T-cell (primary cell): ENCODE measurements at regions of chr15 and their contacts with region 1.

Region 1: DNA sequence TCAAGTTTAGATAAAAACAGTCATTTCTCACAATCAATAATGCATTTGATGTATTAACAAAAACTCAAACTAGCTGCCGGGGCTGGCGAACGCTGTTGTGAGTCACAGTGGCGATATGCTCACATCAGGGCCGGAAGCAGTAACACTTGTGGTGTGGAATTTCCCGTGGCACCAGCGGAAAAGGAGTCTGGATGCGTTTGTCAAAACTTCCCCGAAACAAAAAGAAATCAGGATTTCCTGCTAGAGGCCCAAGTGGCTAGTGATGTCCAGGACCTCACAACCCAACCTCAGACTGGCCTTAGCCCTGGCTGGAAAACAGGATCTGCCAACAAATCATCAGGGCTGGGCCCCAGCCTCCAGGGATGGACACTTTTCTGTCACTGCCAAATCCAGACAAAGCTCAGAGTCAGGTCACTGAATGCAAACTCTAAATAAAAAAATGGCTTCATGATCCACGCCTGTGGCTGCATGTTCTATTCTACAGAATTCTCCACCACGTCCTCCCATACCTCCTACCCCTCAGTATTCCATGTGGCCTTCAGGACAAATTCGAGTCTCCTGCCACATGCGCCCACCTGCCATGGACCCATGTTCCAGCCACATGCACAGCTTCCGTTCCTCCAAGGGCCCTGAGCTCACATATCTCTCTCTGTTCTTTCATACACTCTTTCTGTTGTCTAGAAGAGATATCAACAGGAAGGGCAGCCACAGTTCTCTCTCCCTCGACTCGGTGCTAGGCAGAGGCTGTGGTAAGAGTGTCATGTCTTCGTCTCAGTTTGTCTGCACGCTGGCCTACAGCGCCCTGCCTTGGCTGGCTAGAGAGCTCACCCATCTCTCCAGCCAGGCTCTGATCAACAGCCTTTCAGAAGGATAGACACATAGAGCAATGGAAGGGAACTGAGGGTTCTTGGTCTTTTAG is 35.4 kb downstream of the EHD4 start:
- DNase-seq: peak; percentile 58 to 92 (median 76)
- ATAC-seq: peak; percentile 84 to 88 (median 88)
- H3K4me3 ChIP-seq: peak overlapping the region in 1 of 2 donors; percentile 2
- H3K4me3 Mint-ChIP-seq: peak overlapping the region; percentile 58 to 82 (median 77)
- H3K27ac ChIP-seq: peak overlapping the region; percentile 96
- H3K27ac Mint-ChIP-seq: peak overlapping the region; percentile 98 to 100
- H3K4me1 ChIP-seq: peaks cover 52 to 68% of the 10 kb centered on the region in 2 experiments
- H3K4me1 Mint-ChIP-seq: peaks cover 62 to 75% (median 71%) of the 10 kb centered on the region in 3 donors
- H3K27me3 ChIP-seq: no peaks in the 10 kb centered on the region
- H3K27me3 Mint-ChIP-seq: no peaks in the 10 kb centered on the region

Region 2: DNA sequence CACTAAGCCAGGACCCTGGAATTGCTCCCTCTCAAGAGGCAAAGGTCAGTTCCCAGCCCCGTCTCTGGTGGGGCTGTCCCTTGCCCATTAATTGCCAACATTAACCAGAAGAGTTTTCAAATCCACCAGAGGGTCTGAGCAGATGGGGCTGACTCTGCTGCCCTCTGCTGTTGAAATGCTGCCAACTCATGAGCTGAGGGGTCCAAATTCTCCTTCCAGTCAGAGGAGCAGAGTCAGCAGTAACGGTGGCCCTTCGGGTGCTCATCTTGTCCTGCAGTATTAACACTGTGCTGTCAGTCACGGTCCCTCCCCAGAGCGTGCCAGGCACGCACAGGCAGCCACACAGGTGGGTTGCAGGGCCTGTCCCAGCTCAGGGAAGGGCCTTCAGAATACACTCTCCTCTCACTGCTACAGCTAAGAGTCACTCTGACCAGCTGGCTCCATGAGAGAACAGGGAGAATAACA is 32.3 kb before region 1 on chr15:
- CTCF ChIA-PET with region 1: interaction called, 5 to 23 read pairs
- POLR2A ChIA-PET with region 1: no interaction called
- DNase-seq: peak; percentile 38 to 86 (median 63)
- ATAC-seq: peak; percentile 77 to 88 (median 86)
- H3K4me3 ChIP-seq: no peak overlapping the region
- H3K4me3 Mint-ChIP-seq: no peak overlapping the region
- H3K27ac ChIP-seq: no peak overlapping the region
- H3K27ac Mint-ChIP-seq: peak overlapping the region; percentile 66 to 67
- H3K4me1 ChIP-seq: peaks cover 0 to 10% of the 10 kb centered on the region in 2 experiments
- H3K4me1 Mint-ChIP-seq: peaks cover 7 to 10% (median 9%) of the 10 kb centered on the region in 3 donors
- H3K27me3 ChIP-seq: no peaks in the 10 kb centered on the region
- H3K27me3 Mint-ChIP-seq: no peaks in the 10 kb centered on the region

Region 3: GRCh38 chr15:41957021-41957897 is 20.4 kb after region 1 on chr15:
- CTCF ChIA-PET with region 1: interaction called in 1 of 2 experiments, 4 read pairs
- POLR2A ChIA-PET with region 1: interaction called, 4 to 13 read pairs
- DNase-seq: no peak
- ATAC-seq: no peak
- H3K4me3 ChIP-seq: no peak overlapping the region
- H3K4me3 Mint-ChIP-seq: no peak overlapping the region
- H3K27ac ChIP-seq: no peak overlapping the region
- H3K27ac Mint-ChIP-seq: peak overlapping the region in 1 of 2 donors; percentile 39
- H3K4me1 ChIP-seq: peaks cover 0 to 9% of the 10 kb centered on the region in 2 experiments
- H3K4me1 Mint-ChIP-seq: peaks cover 18 to 27% (median 27%) of the 10 kb centered on the region in 3 donors
- H3K27me3 ChIP-seq: no peaks in the 10 kb centered on the region
- H3K27me3 Mint-ChIP-seq: no peaks in the 10 kb centered on the region

Region 4: DNA sequence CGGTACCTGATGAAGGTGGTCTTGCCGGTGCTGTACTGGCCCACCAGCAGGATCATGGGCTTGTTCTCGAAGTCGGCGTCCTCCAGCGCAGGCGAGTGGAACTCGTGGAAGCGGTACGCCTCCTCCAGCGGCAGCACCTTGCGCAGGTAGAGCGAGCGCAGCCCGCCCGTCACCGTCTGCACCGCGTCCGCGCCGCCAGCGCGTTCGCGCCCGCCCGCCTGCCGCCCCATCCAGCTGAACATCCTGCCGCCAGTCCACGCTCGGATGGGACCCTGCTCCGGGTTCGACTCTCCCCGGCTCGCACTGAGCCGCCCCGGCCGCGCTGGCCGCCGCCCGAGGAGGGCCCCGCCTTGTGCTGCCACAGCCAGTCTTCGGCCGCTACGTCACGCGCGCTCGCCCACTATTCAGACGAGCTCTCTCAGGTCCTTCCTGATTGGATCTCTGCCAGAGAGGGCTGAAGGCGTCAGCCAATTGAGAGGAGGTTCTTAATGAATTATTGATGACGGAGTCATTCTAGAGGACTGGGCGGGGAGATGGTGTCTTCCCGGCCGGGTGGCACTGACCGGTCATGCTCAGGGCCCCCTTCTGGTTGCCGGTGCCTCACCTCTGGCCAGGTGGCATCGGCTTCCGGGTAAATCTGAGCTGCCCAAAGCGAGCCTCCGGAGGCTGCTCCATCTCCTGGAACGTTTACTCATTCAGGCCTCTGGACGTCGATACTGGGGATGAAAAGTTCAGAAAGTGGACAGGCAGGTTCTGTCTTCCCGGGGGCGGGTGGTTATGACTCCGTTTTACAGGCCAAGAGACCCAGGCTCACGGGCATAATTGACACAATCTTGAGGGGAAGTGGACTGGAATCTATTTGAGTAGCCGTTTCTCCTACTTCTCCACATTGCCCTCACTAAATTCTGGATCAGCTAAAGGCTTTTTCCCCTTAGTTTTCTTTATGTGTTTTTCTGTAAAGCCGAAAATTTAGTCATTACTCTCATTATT is 35.6 kb after region 1 on chr15 and contains the start of gene EHD4:
- CTCF ChIA-PET with region 1: interaction called in 1 of 2 experiments, 48 read pairs
- POLR2A ChIA-PET with region 1: interaction called, 3 to 47 read pairs
- DNase-seq: peak; percentile 83 to 98 (median 93)
- ATAC-seq: peak; percentile 85 to 92 (median 90)
- H3K4me3 ChIP-seq: peak within 1 kb of the TSS; percentile 77
- H3K4me3 Mint-ChIP-seq: peak within 1 kb of the TSS; percentile 87 to 92 (median 92)
- H3K27ac ChIP-seq: peak within 1 kb of the TSS; percentile 66
- H3K27ac Mint-ChIP-seq: peak within 1 kb of the TSS; percentile 88 to 89
- H3K4me1 ChIP-seq: peaks cover 25 to 28% of the 10 kb centered on the region in 2 experiments
- H3K4me1 Mint-ChIP-seq: peaks cover 42 to 48% (median 44%) of the 10 kb centered on the region in 3 donors
- H3K27me3 ChIP-seq: peaks cover 0 to 5% of the 10 kb centered on the region in 2 experiments
- H3K27me3 Mint-ChIP-seq: peaks cover 8 to 12% of the 10 kb centered on the region in 2 donors
- total RNA-seq, gene EHD4: 11.7 to 46.8 (median 16.8) TPM

Region 5: DNA sequence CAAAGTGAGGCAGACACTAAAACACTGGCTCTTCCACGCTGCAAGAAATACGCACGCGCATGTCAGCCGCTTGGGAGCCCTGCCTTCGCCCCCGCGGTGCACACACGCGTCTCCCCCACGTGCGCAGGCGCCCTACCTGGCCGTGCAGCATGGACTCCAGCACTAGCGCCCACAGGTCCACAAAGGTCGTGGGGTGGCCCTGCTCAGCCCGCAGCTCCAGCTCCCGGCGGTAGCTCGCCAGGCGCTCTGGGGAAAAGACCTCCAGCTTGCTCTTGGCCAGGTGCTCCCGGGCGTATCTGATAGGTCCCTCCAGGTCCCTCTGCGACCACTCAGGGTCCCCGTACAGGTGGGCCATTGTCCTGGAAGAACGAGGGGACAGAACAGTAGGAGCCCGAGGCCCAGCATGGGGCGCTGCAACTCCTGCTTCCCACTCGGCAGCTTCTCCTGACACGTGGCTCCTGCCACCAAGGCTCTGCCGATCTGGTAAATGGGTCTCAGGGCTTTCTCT is 142.5 kb after region 1 on chr15:
- CTCF ChIA-PET with region 1: no interaction called
- POLR2A ChIA-PET with region 1: no interaction called
- DNase-seq: peak in 1 of 35 experiments; percentile 17
- ATAC-seq: no peak
- H3K4me3 ChIP-seq: no peak overlapping the region
- H3K4me3 Mint-ChIP-seq: no peak overlapping the region
- H3K27ac ChIP-seq: no peak overlapping the region
- H3K27ac Mint-ChIP-seq: no peak overlapping the region
- H3K4me1 ChIP-seq: peaks cover 0 to 4% of the 10 kb centered on the region in 2 experiments
- H3K4me1 Mint-ChIP-seq: peaks cover 4 to 5% (median 5%) of the 10 kb centered on the region in 3 donors
- H3K27me3 ChIP-seq: peaks cover 0 to 31% of the 10 kb centered on the region in 2 experiments
- H3K27me3 Mint-ChIP-seq: peaks cover 10 to 12% of the 10 kb centered on the region in 2 donors